CD4-positive, alpha-beta memory T cell (primary cell): ENCODE measurements at regions of chr1 and their contacts with region 1.

Region 1: GRCh38 chr1:175742790-175743459 is 470 bp downstream of the TNR start:
- DNase-seq: no peak
- H3K4me3 ChIP-seq: no peak overlapping the region
- H3K4me3 Mint-ChIP-seq: no peak overlapping the region
- H3K27ac ChIP-seq: no peak overlapping the region
- H3K27ac Mint-ChIP-seq: no peak overlapping the region
- H3K4me1 ChIP-seq: no peaks in the 10 kb centered on the region
- H3K4me1 Mint-ChIP-seq: no peaks in the 10 kb centered on the region
- H3K27me3 ChIP-seq: no peaks in the 10 kb centered on the region
- H3K27me3 Mint-ChIP-seq: peaks cover 13 to 25% of the 10 kb centered on the region in 2 donors

Region 2: DNA sequence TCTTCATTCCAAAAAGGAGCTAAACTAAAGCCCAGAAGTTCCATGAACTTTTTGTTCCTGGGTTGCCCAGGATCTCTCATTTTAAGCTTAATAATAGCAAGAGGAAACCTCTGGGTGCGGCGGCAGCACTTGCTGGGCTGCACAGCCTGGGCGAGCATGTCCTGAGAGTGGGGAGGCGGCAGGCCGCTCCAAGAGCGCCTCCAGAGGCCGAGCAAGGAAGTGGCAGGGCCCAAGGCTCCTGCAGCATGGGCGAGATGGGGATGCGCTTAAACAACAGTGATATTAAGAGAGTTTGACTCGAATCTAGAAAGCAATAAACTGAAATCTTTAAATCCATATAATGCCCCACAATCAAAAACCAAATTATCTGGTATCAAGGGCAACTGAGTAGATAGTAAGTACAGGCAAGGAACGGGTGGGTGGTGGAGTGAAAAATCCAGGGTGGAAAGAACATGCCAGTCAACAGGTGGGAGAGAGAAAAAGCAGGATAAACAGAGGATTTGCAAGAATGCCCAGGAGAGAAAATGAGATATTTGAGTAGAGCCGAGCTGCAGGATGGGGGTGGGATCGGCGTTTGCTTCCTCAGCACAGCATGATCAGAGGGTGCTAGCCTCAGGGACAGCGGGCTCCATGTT is 14.6 kb after region 1 on chr1:
- CTCF ChIA-PET with region 1: interaction called, 12 read pairs
- POLR2A ChIA-PET with region 1: no interaction called
- intact Hi-C with region 1: no loop called
- DNase-seq: peak in 1 of 5 donors; percentile 0
- H3K4me3 ChIP-seq: no peak overlapping the region
- H3K4me3 Mint-ChIP-seq: no peak overlapping the region
- H3K27ac ChIP-seq: no peak overlapping the region
- H3K27ac Mint-ChIP-seq: no peak overlapping the region
- H3K4me1 ChIP-seq: no peaks in the 10 kb centered on the region
- H3K4me1 Mint-ChIP-seq: peaks cover 0 to 4% (median 0%) of the 10 kb centered on the region in 4 donors
- H3K27me3 ChIP-seq: no peaks in the 10 kb centered on the region
- H3K27me3 Mint-ChIP-seq: peaks cover 4 to 9% of the 10 kb centered on the region in 2 donors

Region 3: GRCh38 chr1:175960169-175960568 is 217.2 kb after region 1 on chr1:
- CTCF ChIA-PET with region 1: no interaction called
- POLR2A ChIA-PET with region 1: no interaction called
- intact Hi-C with region 1: no loop called
- DNase-seq: no peak
- H3K4me3 ChIP-seq: no peak overlapping the region
- H3K4me3 Mint-ChIP-seq: no peak overlapping the region
- H3K27ac ChIP-seq: no peak overlapping the region
- H3K27ac Mint-ChIP-seq: peak overlapping the region in 1 of 7 donors; percentile 50
- H3K4me1 ChIP-seq: no peaks in the 10 kb centered on the region
- H3K4me1 Mint-ChIP-seq: peaks cover 0 to 7% (median 4%) of the 10 kb centered on the region in 4 donors
- H3K27me3 ChIP-seq: no peaks in the 10 kb centered on the region
- H3K27me3 Mint-ChIP-seq: no peaks in the 10 kb centered on the region